Psoas muscle (tissue), 8 donors: ENCODE measurements at regions of chr9 and their contacts with region 1.

Region 1: DNA sequence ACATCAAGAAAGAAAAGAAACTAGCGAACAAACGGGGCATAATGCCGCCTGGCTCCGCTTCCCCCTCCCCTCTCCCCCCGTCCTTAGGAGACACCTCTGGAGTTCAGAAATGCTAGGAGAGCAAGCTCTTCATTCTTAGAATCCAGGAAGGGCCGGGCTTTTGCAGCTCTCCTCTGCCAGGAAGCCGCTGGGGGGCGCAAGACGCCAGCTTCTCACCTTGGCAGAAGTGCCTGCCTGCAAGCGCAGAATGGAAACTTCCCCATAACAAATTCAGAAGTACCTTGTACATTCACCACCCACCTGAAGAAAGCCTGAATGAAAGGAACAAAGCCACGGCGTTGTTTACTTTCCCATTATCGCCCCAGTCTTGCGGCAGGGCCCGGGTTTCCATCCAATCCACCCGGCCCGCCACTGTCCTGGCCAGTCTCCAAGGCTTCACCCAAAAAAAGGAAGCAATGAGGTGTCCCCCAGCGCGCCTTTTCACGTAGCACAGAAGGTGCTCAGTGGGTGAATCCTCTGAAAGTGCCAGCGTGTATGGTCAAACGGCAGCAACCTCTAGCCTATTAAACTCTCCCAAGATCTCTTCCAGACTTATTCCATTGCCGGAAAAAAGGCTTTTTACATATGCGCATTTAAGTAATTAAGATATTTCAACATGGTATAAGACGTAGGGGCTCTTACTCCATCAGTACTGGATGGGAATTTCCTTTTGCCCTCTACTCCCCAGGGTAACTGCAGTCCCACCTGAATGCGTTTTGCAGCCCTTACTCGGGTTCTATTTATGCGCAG is 1.6 kb upstream of the GADD45G start:
- DNase-seq: peak; percentile 88 to 94
- ATAC-seq: peak; percentile 28 to 55 (median 42)
- H3K4me3 ChIP-seq: peak overlapping the region; percentile 82
- H3K27ac ChIP-seq: peak overlapping the region; percentile 93
- H3K4me1 ChIP-seq: peaks cover 25% of the 10 kb centered on the region
- H3K27me3 ChIP-seq: no peaks in the 10 kb centered on the region
- CTCF ChIP-seq: peak; percentile 84

Region 2: GRCh38 chr9:89591274-89592212 is 11.6 kb before region 1 on chr9:
- intact Hi-C with region 1: no loop called
- DNase-seq: no peak
- ATAC-seq: no peak
- H3K4me3 ChIP-seq: no peak overlapping the region
- H3K27ac ChIP-seq: no peak overlapping the region
- H3K4me1 ChIP-seq: no peaks in the 10 kb centered on the region
- H3K27me3 ChIP-seq: peaks cover 0 to 2% (median 0%) of the 10 kb centered on the region in 3 donors
- CTCF ChIP-seq: no peak

Region 3: GRCh38 chr9:89657765-89658164 is 54.6 kb after region 1 on chr9:
- intact Hi-C with region 1: loop called in 1 of 2 experiments (anchors 5 kb)
- DNase-seq: peak in 1 of 2 donors; percentile 8
- ATAC-seq: no peak
- H3K4me3 ChIP-seq: no peak overlapping the region
- H3K27ac ChIP-seq: no peak overlapping the region
- H3K4me1 ChIP-seq: peaks cover 22% of the 10 kb centered on the region
- H3K27me3 ChIP-seq: no peaks in the 10 kb centered on the region
- CTCF ChIP-seq: no peak

Region 4: DNA sequence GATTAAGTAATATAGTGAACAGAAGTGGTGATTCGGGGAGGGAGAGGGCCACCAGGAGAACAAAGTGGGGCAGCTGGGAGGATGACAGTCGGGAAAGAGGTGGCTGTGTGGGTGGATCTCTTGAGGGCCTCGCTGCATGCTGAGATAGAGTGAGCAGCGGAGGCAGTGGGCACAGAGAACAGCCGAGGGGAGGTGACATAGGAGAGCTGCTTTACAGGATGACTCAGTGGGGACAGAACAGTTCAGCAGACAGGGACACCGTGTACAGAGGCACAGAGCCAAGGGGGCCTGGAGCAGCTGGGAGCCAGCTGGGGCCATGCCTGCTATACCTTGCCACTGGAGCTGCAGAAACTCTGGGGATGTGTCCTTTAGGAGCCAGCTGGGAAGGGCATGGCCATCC is 275.5 kb after region 1 on chr9:
- intact Hi-C with region 1: loop called in 1 of 2 experiments (anchors 2 kb)
- DNase-seq: peak; percentile 83 to 95
- ATAC-seq: peak; percentile 87 to 94 (median 90)
- H3K4me3 ChIP-seq: no peak overlapping the region
- H3K27ac ChIP-seq: peak overlapping the region; percentile 72
- H3K4me1 ChIP-seq: peaks cover 49% of the 10 kb centered on the region
- H3K27me3 ChIP-seq: no peaks in the 10 kb centered on the region
- CTCF ChIP-seq: no peak

Region 5: GRCh38 chr9:89999534-90000370 is 396.6 kb after region 1 on chr9:
- intact Hi-C with region 1: loop called (anchors 2 to 10 kb)
- DNase-seq: peak; percentile 67 to 87
- ATAC-seq: peak; percentile 88 to 95 (median 92)
- H3K4me3 ChIP-seq: peak overlapping the region; percentile 17
- H3K27ac ChIP-seq: peak overlapping the region; percentile 82
- H3K4me1 ChIP-seq: peaks cover 52% of the 10 kb centered on the region
- H3K27me3 ChIP-seq: no peaks in the 10 kb centered on the region
- CTCF ChIP-seq: no peak